ENCODE measurements at regions of chr12 and their contacts with region 1.

Region 1: GRCh38 chr12:53005986-53006809 is at the start of gene EIF4B:
- DNase-seq: peak; percentile 91 to 100 (median 99)
- ATAC-seq: peak; percentile 96
- H3K4me3 ChIP-seq: peak within 1 kb of the TSS; percentile 99
- H3K4me3 Mint-ChIP-seq: peak within 1 kb of the TSS; percentile 96 to 100 (median 99)
- H3K27ac ChIP-seq: peak within 1 kb of the TSS; percentile 86
- H3K27ac Mint-ChIP-seq: peak within 1 kb of the TSS; percentile 96 to 99 (median 98)
- H3K4me1 ChIP-seq: peaks cover 32 to 36% of the 10 kb centered on the region in 2 donors
- H3K4me1 Mint-ChIP-seq: peaks cover 26 to 59% (median 46%) of the 10 kb centered on the region in 7 donors
- H3K27me3 ChIP-seq: no peaks in the 10 kb centered on the region
- H3K27me3 Mint-ChIP-seq: peaks cover 0 to 9% (median 0%) of the 10 kb centered on the region in 5 donors
- total RNA-seq, gene EIF4B: 380 to 919 (median 833) TPM

Region 2: DNA sequence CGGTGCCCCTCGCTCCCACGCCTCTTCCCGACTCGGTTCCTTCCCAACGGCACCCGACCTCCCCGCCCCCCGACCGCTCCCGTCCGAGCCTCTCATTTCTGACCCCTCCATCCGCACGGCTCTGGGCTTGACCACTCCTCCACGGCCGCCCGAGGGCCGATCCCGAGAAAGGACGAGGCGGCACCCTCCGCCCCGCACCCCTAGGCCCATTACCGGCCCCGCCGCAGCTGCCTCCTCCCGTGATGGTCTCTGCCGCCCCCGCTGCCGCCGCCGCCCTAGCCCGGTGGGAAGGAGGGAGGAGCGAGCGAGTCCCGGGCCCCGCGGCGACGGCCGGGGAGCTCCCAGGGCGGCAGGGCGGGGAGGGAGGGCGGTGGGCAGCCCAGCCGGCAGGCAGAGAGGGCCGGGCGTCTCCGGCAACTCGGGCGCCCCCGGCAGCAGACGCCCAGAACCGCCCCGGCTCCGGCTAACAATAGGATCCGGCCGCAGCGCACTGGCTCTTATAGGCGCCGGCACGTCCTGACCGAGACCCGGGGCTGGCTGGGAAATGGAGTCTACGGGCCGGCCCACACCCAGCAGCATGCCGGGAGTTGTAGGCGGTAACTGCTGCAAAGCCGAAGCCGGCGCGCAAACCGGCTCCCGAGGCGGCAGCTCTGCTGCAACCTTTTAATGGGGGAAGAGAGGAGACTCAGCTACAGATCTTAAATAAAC is 1922.9 kb before region 1 on chr12 and contains the start of gene CSRNP2:
- CTCF ChIA-PET with region 1: no interaction called
- POLR2A ChIA-PET with region 1: no interaction called
- intact Hi-C with region 1: loop called in 1 of 2 experiments (anchors 5 kb)
- DNase-seq: peak; percentile 90 to 95 (median 94)
- ATAC-seq: peak; percentile 100
- H3K4me3 ChIP-seq: peak within 1 kb of the TSS; percentile 78
- H3K4me3 Mint-ChIP-seq: peak within 1 kb of the TSS; percentile 89 to 100 (median 96)
- H3K27ac ChIP-seq: peak within 1 kb of the TSS; percentile 97
- H3K27ac Mint-ChIP-seq: peak within 1 kb of the TSS; percentile 89 to 98 (median 93)
- H3K4me1 ChIP-seq: peaks cover 7% of the 10 kb centered on the region in 2 donors
- H3K4me1 Mint-ChIP-seq: peaks cover 22 to 46% (median 43%) of the 10 kb centered on the region in 7 donors
- H3K27me3 ChIP-seq: no peaks in the 10 kb centered on the region
- H3K27me3 Mint-ChIP-seq: no peaks in the 10 kb centered on the region
- total RNA-seq, gene CSRNP2: 20.0 to 38.7 (median 23.4) TPM

Region 3: DNA sequence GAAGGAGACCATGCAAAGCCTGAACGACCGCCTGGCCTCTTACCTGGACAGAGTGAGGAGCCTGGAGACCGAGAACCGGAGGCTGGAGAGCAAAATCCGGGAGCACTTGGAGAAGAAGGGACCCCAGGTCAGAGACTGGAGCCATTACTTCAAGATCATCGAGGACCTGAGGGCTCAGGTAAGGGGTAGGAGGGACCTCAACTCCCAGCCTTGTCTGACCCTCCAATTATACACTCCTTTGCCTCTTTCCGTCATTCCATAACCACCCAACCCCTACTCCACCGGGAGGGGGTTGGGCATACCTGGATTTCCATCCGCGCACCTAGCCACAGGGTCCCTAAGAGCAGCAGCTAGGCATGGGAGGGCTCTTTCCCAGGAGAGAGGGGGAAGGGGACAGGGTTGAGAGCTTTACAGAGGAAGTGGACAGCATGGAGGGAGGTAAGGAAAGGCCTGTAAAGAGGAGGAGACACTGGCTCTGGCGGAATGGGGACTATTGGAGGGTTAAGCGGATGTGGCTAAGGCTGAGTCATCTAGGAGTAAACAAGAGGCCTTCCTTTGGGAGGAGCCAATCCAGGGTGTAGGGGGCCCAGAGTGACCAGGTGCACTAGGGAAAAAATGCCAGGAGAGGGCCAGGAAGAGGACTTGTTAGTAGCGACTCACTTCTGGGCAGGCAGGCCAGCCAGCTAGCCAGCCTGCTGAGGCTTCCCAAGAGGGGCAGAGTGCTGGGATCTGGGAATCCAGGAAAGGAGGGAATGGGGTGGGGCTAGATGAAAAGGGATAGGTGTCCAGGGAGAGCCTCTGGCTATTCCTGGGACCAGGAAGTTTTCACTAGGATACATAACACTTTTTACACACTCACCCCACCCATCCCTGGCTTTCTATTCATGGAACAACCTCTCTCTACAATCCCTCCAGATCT is 56.5 kb before region 1 on chr12:
- CTCF ChIA-PET with region 1: no interaction called
- POLR2A ChIA-PET with region 1: no interaction called
- intact Hi-C with region 1: loop called in 1 of 2 experiments (anchors 1 kb)
- DNase-seq: no peak
- ATAC-seq: no peak
- H3K4me3 ChIP-seq: peak overlapping the region; percentile 56
- H3K4me3 Mint-ChIP-seq: peak overlapping the region; percentile 39 to 90 (median 82)
- H3K27ac ChIP-seq: peak overlapping the region; percentile 67
- H3K27ac Mint-ChIP-seq: peak overlapping the region in 7 of 9 donors; percentile 69 to 92 (median 76)
- H3K4me1 ChIP-seq: peaks cover 0 to 5% of the 10 kb centered on the region in 2 donors
- H3K4me1 Mint-ChIP-seq: peaks cover 2 to 18% (median 6%) of the 10 kb centered on the region in 7 donors
- H3K27me3 ChIP-seq: no peaks in the 10 kb centered on the region
- H3K27me3 Mint-ChIP-seq: peaks cover 0 to 13% (median 0%) of the 10 kb centered on the region in 5 donors

Region 4: DNA sequence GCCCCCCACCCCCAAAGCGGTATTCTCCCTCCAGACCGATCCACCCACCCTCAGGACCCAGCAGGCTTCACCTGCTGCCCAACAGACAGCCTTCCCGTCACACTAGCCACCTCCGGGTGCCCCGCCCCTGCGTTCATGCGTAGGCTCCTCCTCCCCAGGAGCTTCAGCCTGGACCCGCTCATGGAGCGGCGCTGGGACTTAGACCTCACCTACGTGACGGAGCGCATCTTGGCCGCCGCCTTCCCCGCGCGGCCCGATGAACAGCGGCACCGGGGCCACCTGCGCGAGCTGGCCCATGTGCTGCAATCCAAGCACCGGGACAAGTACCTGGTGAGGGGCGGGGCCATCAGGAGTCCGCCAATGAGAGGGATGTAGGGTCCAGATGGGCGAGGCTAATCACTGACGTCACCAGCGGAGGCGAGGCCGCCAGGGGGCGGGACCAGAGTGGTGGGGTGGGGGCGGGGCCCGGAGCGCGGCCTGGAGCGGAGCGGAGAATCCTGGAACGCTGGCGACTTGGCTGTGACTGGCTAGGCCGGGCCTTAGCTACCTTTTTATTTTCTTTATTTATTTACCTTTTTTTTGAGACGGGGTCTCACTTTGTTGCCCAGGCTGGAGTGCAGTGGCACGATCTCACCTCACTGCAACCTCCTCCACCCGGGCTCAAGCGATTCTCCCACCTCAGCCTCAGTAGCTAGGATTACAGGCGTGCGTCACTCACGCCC is 48.1 kb after region 1 on chr12:
- CTCF ChIA-PET with region 1: no interaction called
- POLR2A ChIA-PET with region 1: interaction called, 16 read pairs
- intact Hi-C with region 1: loop called (anchors 1 kb)
- DNase-seq: peak; percentile 85 to 94 (median 93)
- ATAC-seq: peak; percentile 98
- H3K4me3 ChIP-seq: peak overlapping the region; percentile 95
- H3K4me3 Mint-ChIP-seq: peak overlapping the region; percentile 89 to 97 (median 94)
- H3K27ac ChIP-seq: peak overlapping the region; percentile 71
- H3K27ac Mint-ChIP-seq: peak overlapping the region; percentile 83 to 96 (median 92)
- H3K4me1 ChIP-seq: peaks cover 6 to 9% of the 10 kb centered on the region in 2 donors
- H3K4me1 Mint-ChIP-seq: peaks cover 8 to 14% (median 11%) of the 10 kb centered on the region in 7 donors
- H3K27me3 ChIP-seq: no peaks in the 10 kb centered on the region
- H3K27me3 Mint-ChIP-seq: no peaks in the 10 kb centered on the region

Region 5: GRCh38 chr12:53113136-53113705 is 107.0 kb after region 1 on chr12:
- CTCF ChIA-PET with region 1: no interaction called
- POLR2A ChIA-PET with region 1: no interaction called
- intact Hi-C with region 1: no loop called
- DNase-seq: no peak
- ATAC-seq: no peak
- H3K4me3 ChIP-seq: no peak overlapping the region
- H3K4me3 Mint-ChIP-seq: no peak overlapping the region
- H3K27ac ChIP-seq: no peak overlapping the region
- H3K27ac Mint-ChIP-seq: no peak overlapping the region
- H3K4me1 ChIP-seq: no peaks in the 10 kb centered on the region
- H3K4me1 Mint-ChIP-seq: no peaks in the 10 kb centered on the region
- H3K27me3 ChIP-seq: no peaks in the 10 kb centered on the region
- H3K27me3 Mint-ChIP-seq: peaks cover 0 to 5% (median 0%) of the 10 kb centered on the region in 5 donors

Region 6: GRCh38 chr12:53295070-53295890 is 289.1 kb after region 1 on chr12 and contains the start of gene PFDN5:
- CTCF ChIA-PET with region 1: no interaction called
- POLR2A ChIA-PET with region 1: interaction called, 6 read pairs
- intact Hi-C with region 1: loop called (anchors 1 kb)
- DNase-seq: peak; percentile 71 to 94 (median 88)
- ATAC-seq: peak; percentile 95
- H3K4me3 ChIP-seq: peak within 1 kb of the TSS; percentile 85
- H3K4me3 Mint-ChIP-seq: peak within 1 kb of the TSS; percentile 91 to 100 (median 98)
- H3K27ac ChIP-seq: peak within 1 kb of the TSS; percentile 94
- H3K27ac Mint-ChIP-seq: peak within 1 kb of the TSS; percentile 96 to 99 (median 98)
- H3K4me1 ChIP-seq: peaks cover 24 to 28% of the 10 kb centered on the region in 2 donors
- H3K4me1 Mint-ChIP-seq: peaks cover 27 to 62% (median 37%) of the 10 kb centered on the region in 7 donors
- H3K27me3 ChIP-seq: no peaks in the 10 kb centered on the region
- H3K27me3 Mint-ChIP-seq: no peaks in the 10 kb centered on the region
- total RNA-seq, gene PFDN5: 323 to 785 (median 692) TPM

Region 7: DNA sequence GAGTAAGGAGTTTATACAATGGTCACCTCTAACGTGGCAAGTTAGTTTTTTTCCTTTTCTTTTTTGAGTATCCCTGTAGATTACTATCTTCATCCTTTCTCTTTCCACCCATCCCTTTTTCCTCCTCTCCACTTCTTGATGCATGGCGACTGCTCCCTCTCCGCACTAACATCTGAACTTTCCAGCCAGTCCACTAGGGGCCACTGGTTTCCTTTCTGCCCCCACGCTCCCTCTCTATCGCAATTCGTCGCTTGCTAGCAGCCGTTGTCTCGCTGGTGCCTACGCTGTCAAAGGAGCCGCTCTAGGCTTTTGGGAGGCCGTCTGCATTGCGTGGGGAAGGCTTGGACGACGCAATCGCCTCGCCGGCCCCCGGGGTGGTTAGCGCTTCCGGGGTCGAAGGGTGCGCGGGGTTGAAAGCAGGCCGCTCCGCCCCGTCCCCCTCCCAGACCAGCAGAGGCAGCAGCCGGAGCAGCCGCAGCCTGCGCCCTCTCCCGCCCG is 445.5 kb after region 1 on chr12 and contains the start of gene PCBP2:
- CTCF ChIA-PET with region 1: no interaction called
- POLR2A ChIA-PET with region 1: interaction called, 3 read pairs
- intact Hi-C with region 1: loop called in 1 of 2 experiments (anchors 5 kb)
- DNase-seq: peak; percentile 88 to 98 (median 97)
- ATAC-seq: peak; percentile 94
- H3K4me3 ChIP-seq: peak within 1 kb of the TSS; percentile 69
- H3K4me3 Mint-ChIP-seq: peak within 1 kb of the TSS; percentile 51 to 99 (median 98)
- H3K27ac ChIP-seq: peak within 1 kb of the TSS; percentile 96
- H3K27ac Mint-ChIP-seq: peak within 1 kb of the TSS; percentile 85 to 100 (median 99)
- H3K4me1 ChIP-seq: peaks cover 20 to 26% of the 10 kb centered on the region in 2 donors
- H3K4me1 Mint-ChIP-seq: peaks cover 23 to 42% (median 37%) of the 10 kb centered on the region in 7 donors
- H3K27me3 ChIP-seq: no peaks in the 10 kb centered on the region
- H3K27me3 Mint-ChIP-seq: no peaks in the 10 kb centered on the region
- total RNA-seq, gene PCBP2: 737 to 1,110 (median 928) TPM

Region 8: GRCh38 chr12:53684654-53685220 is 678.5 kb after region 1 on chr12:
- CTCF ChIA-PET with region 1: no interaction called
- POLR2A ChIA-PET with region 1: no interaction called
- intact Hi-C with region 1: no loop called
- DNase-seq: no peak
- ATAC-seq: no peak
- H3K4me3 ChIP-seq: no peak overlapping the region
- H3K4me3 Mint-ChIP-seq: no peak overlapping the region
- H3K27ac ChIP-seq: no peak overlapping the region
- H3K27ac Mint-ChIP-seq: peak overlapping the region in 1 of 9 donors; percentile 13
- H3K4me1 ChIP-seq: no peaks in the 10 kb centered on the region
- H3K4me1 Mint-ChIP-seq: peaks cover 0 to 1% (median 0%) of the 10 kb centered on the region in 7 donors
- H3K27me3 ChIP-seq: no peaks in the 10 kb centered on the region
- H3K27me3 Mint-ChIP-seq: peaks cover 10 to 25% (median 15%) of the 10 kb centered on the region in 5 donors

Measured in naive thymus-derived CD4-positive, alpha-beta T cell (primary cell).